Activated CD4-positive, alpha-beta T cell treated with anti-CD3 and anti-CD28 coated beads, Interleukin-2, amount 10 ng/mL, durations not matched to agents 24 days and 14 days (primary cell): ENCODE measurements at regions of chr17 and their contacts with region 1.

Region 1: GRCh38 chr17:20315821-20316220 is 151.5 kb downstream of the LGALS9B start:
- DNase-seq: peak; percentile 48
- H3K4me3 Mint-ChIP-seq: no peak overlapping the region
- H3K27ac Mint-ChIP-seq: no peak overlapping the region
- H3K4me1 Mint-ChIP-seq: peaks cover 3% of the 10 kb centered on the region
- H3K27me3 Mint-ChIP-seq: no peaks in the 10 kb centered on the region

Region 2: DNA sequence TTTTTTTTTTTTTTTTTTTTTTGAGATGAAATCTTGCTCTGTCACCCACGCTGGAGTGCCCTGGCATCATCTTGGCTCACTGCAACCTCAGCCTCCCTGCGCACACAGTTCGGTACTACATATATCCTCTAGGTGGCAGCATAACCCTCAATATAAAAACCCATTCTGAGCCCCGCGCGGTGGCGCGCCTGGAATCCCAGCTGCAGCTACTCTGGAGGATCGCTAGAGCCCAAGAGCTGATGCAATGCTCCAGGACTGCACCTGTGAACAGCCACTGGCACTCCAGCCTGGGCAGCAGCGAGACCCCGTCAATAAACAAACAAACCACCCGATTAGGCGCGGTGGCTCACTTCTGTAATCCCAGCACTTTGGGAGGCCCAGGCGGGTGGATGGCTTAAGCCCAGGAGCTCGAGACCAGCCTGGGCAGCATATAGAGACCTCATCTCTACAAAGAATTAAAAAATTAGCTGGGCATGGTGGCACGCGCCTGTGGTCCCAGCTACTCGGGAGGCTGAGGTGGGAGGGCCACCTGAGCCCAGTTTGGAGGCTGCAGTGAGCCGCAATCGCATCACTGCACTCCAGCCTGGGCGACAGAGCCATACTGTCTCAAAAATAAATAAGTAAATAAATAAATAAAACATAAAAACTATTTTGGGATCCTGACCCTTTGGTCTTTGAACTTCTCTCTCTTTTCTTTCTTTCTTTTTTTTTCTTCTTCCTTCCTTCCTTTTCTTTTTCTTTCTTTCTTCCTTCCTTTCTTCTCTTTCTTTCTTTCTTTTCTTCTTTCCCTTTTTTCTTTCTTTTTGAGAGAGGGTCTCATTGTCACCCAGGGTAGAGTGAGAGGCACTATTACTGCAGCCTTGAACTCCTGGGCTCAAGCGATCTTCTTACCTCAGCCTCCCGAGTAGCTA is 322.8 kb before region 1 on chr17:
- intact Hi-C with region 1: loop called (anchors 5 kb)
- DNase-seq: peak; percentile 90
- H3K4me3 Mint-ChIP-seq: no peak overlapping the region
- H3K27ac Mint-ChIP-seq: no peak overlapping the region
- H3K4me1 Mint-ChIP-seq: peaks cover 5% of the 10 kb centered on the region
- H3K27me3 Mint-ChIP-seq: peaks cover 14% of the 10 kb centered on the region

Region 3: GRCh38 chr17:20121359-20122253 is 194.2 kb before region 1 on chr17:
- intact Hi-C with region 1: loop called (anchors 2 kb)
- DNase-seq: peak; percentile 89
- H3K4me3 Mint-ChIP-seq: no peak overlapping the region
- H3K27ac Mint-ChIP-seq: no peak overlapping the region
- H3K4me1 Mint-ChIP-seq: peaks cover 2% of the 10 kb centered on the region
- H3K27me3 Mint-ChIP-seq: peaks cover 9% of the 10 kb centered on the region

Region 4: DNA sequence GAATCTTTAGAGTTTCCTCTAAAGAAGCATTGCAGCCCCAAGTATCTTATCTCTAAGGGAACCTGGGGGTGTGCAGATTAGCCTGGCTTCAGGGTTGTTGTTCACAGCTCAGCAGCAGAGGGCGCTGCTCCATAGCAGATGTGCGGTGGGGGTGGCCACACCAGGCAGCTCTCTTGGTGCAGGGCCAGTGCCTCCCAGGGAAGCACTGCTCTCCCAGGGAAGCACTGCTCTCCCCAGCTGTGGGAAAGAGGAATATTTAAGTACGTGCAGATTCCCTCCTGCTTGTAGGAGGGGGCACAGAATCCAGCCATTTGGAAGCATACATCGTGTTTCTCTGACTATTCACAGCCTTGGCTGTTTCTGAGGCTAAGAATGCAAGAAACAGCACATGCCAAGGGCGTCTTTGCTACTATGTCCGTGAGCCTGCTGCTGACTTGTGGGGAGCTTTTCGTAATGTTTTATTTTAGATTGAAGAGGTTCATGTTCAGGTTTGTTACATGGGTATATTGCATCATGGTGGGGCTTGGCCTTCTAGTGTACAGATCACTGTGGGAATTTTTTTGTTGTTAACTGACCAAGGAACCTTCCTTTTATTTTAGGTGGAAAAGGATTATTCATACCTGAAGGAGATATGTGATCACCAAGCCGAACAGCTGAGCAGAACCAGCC is 88.9 kb before region 1 on chr17:
- intact Hi-C with region 1: loop called (anchors 1 kb)
- DNase-seq: peak; percentile 95
- H3K4me3 Mint-ChIP-seq: no peak overlapping the region
- H3K27ac Mint-ChIP-seq: no peak overlapping the region
- H3K4me1 Mint-ChIP-seq: peaks cover 17% of the 10 kb centered on the region
- H3K27me3 Mint-ChIP-seq: peaks cover 4% of the 10 kb centered on the region

Region 5: DNA sequence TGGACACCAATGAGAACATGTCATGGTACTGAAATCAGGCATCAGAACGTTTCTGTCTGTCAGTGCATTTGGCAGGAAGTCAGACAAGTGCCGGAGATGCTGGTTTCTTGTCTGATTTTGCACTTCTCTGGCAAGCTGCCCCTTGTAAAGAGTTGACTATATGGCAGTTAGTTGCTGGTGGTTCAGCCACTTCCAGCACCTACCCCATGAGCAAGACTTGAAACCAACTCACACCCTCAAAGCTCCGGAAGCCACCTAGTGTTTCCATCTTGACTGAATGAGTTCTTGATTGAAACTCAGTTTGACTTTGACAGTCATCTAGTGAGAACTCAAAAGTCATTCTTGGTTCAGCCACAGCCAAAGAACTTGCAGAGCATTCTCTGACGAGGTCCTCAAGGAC is 81.5 kb before region 1 on chr17:
- intact Hi-C with region 1: loop called (anchors 2 kb)
- DNase-seq: peak; percentile 91
- H3K4me3 Mint-ChIP-seq: peak overlapping the region; percentile 51
- H3K27ac Mint-ChIP-seq: peak overlapping the region; percentile 79
- H3K4me1 Mint-ChIP-seq: peaks cover 20% of the 10 kb centered on the region
- H3K27me3 Mint-ChIP-seq: no peaks in the 10 kb centered on the region